Gastrocnemius medialis (tissue), 4 donors: ENCODE measurements at regions of chr15 and their contacts with region 1.

Region 1: GRCh38 chr15:71329497-71330260 is 214.4 kb downstream of the THSD4 start:
- DNase-seq: peak; percentile 78 to 80
- ATAC-seq: peak; percentile 98
- H3K4me3 ChIP-seq: no peak overlapping the region
- H3K27ac ChIP-seq: peak overlapping the region; percentile 67 to 83 (median 74)
- H3K4me1 ChIP-seq: peaks cover 18 to 31% of the 10 kb centered on the region in 2 donors
- H3K27me3 ChIP-seq: no peaks in the 10 kb centered on the region
- CTCF ChIP-seq: no peak
- POLR2A ChIP-seq: no peak

Region 2: GRCh38 chr15:70923311-70924080 is 406.2 kb before region 1 on chr15:
- in situ Hi-C with region 1: no loop called
- intact Hi-C with region 1: no loop called
- DNase-seq: no peak
- ATAC-seq: no peak
- H3K4me3 ChIP-seq: no peak overlapping the region
- H3K27ac ChIP-seq: no peak overlapping the region
- H3K4me1 ChIP-seq: no peaks in the 10 kb centered on the region
- H3K27me3 ChIP-seq: no peaks in the 10 kb centered on the region
- CTCF ChIP-seq: no peak
- POLR2A ChIP-seq: no peak

Region 3: DNA sequence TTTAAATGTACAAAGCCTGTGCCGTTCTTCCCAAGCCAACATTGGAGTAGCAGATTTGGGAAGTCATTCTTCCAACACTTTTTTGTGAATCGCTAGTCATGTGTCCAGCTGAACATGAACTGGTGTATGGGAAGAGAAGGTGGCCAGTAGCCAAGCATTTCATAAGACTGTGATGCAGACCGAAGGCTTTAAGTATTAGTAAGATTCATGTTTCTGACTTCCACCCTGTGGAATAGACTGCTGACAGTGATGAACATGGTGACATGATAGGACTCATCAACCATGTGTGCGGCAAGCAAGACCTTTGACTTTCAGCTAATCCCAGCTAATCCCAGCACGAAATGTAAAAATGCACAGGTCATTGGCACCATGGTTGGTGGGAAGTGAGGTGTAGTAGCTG is 262.7 kb before region 1 on chr15:
- in situ Hi-C with region 1: no loop called
- intact Hi-C with region 1: no loop called
- DNase-seq: no peak
- ATAC-seq: no peak
- H3K4me3 ChIP-seq: no peak overlapping the region
- H3K27ac ChIP-seq: no peak overlapping the region
- H3K4me1 ChIP-seq: no peaks in the 10 kb centered on the region
- H3K27me3 ChIP-seq: no peaks in the 10 kb centered on the region
- CTCF ChIP-seq: no peak
- POLR2A ChIP-seq: no peak

Region 4: DNA sequence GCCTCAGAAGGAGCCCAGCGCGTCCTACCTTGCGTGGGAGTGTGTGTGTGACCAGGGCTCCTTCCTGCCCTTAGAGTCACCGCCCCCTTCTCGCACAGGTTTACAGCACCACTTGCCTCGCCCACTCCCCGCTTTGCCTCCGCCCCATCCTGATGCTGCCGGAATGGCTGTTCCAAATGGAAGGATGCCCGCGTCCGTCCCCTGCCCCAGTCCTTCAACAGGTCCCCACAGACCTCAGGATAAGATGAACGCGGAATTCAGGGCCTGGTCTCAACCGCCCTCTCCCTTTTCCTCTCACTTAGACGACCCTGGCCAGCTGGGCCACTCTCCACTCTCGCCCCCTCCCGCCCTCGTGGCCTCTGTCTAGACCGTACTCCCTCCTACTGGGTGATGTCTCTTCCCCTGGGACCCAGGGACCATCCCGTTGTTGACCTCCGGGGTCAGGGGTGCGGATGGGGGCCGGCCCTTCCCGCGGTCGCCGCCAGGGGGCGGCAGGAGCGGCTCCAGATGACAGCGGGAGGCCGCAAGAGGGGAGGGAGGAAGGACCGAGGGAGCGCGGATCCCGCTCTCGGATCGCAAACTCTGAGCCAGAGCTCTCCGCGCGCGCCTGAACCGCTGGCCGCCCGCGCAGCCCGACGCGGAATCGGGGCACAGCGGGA is 214.7 kb before region 1 on chr15 and contains the start of gene THSD4:
- in situ Hi-C with region 1: loop called in 1 of 4 experiments (anchors 25 kb)
- intact Hi-C with region 1: loop called (anchors 2 kb)
- DNase-seq: peak; percentile 18 to 60
- ATAC-seq: peak; percentile 73 to 89
- H3K4me3 ChIP-seq: peak within 1 kb of the TSS; percentile 60 to 71 (median 64)
- H3K27ac ChIP-seq: peak within 1 kb of the TSS in 3 of 4 donors; percentile 65 to 79 (median 76)
- H3K4me1 ChIP-seq: peaks cover 10 to 13% of the 10 kb centered on the region in 2 donors
- H3K27me3 ChIP-seq: no peaks in the 10 kb centered on the region
- CTCF ChIP-seq: peak; percentile 93 to 99 (median 96)
- POLR2A ChIP-seq: no peak
- total RNA-seq, gene THSD4: 0.35 to 3.1 (median 0.60) TPM

Region 5: GRCh38 chr15:71125831-71126453 is 203.7 kb before region 1 on chr15:
- in situ Hi-C with region 1: loop called in 1 of 4 experiments (anchors 25 kb)
- intact Hi-C with region 1: loop called (anchors 5 kb)
- DNase-seq: peak in 1 of 2 donors; percentile 32
- ATAC-seq: no peak
- H3K4me3 ChIP-seq: no peak overlapping the region
- H3K27ac ChIP-seq: peak overlapping the region; percentile 58 to 85 (median 78)
- H3K4me1 ChIP-seq: peaks cover 50 to 53% of the 10 kb centered on the region in 2 donors
- H3K27me3 ChIP-seq: no peaks in the 10 kb centered on the region
- CTCF ChIP-seq: peak in 4 of 5 experiments; percentile 15 to 55 (median 26)
- POLR2A ChIP-seq: no peak

Region 6: GRCh38 chr15:71278989-71279756 is 50.5 kb before region 1 on chr15:
- in situ Hi-C with region 1: no loop called
- intact Hi-C with region 1: loop called (anchors 5 kb)
- DNase-seq: peak; percentile 36 to 43
- ATAC-seq: peak; percentile 78 to 80
- H3K4me3 ChIP-seq: no peak overlapping the region
- H3K27ac ChIP-seq: peak overlapping the region in 3 of 4 donors; percentile 3 to 34 (median 6)
- H3K4me1 ChIP-seq: peaks cover 13% of the 10 kb centered on the region in 2 donors
- H3K27me3 ChIP-seq: no peaks in the 10 kb centered on the region
- CTCF ChIP-seq: no peak
- POLR2A ChIP-seq: no peak

Region 7: GRCh38 chr15:71437404-71438318 is 108.0 kb after region 1 on chr15:
- in situ Hi-C with region 1: no loop called
- intact Hi-C with region 1: loop called (anchors 5 kb)
- DNase-seq: no peak
- ATAC-seq: no peak
- H3K4me3 ChIP-seq: no peak overlapping the region
- H3K27ac ChIP-seq: no peak overlapping the region
- H3K4me1 ChIP-seq: peaks cover 8 to 11% of the 10 kb centered on the region in 2 donors
- H3K27me3 ChIP-seq: no peaks in the 10 kb centered on the region
- CTCF ChIP-seq: no peak
- POLR2A ChIP-seq: no peak

Region 8: GRCh38 chr15:71916834-71917233 is 587.2 kb after region 1 on chr15:
- in situ Hi-C with region 1: no loop called
- intact Hi-C with region 1: no loop called
- DNase-seq: no peak
- ATAC-seq: no peak
- H3K4me3 ChIP-seq: no peak overlapping the region
- H3K27ac ChIP-seq: no peak overlapping the region
- H3K4me1 ChIP-seq: no peaks in the 10 kb centered on the region
- H3K27me3 ChIP-seq: no peaks in the 10 kb centered on the region
- CTCF ChIP-seq: no peak
- POLR2A ChIP-seq: no peak